Heart left ventricle (tissue), 16 donors: ENCODE measurements at regions of chr6 and their contacts with region 1.

Region 1: GRCh38 chr6:29759457-29759856 is 36.2 kb downstream of the HLA-F start:
- DNase-seq: no peak
- ATAC-seq: no peak
- H3K4me3 ChIP-seq: no peak overlapping the region
- H3K27ac ChIP-seq: no peak overlapping the region
- H3K4me1 ChIP-seq: peaks cover 0 to 16% (median 0%) of the 10 kb centered on the region in 12 donors
- H3K27me3 ChIP-seq: no peaks in the 10 kb centered on the region
- CTCF ChIP-seq: no peak
- POLR2A ChIP-seq: no peak

Region 2: DNA sequence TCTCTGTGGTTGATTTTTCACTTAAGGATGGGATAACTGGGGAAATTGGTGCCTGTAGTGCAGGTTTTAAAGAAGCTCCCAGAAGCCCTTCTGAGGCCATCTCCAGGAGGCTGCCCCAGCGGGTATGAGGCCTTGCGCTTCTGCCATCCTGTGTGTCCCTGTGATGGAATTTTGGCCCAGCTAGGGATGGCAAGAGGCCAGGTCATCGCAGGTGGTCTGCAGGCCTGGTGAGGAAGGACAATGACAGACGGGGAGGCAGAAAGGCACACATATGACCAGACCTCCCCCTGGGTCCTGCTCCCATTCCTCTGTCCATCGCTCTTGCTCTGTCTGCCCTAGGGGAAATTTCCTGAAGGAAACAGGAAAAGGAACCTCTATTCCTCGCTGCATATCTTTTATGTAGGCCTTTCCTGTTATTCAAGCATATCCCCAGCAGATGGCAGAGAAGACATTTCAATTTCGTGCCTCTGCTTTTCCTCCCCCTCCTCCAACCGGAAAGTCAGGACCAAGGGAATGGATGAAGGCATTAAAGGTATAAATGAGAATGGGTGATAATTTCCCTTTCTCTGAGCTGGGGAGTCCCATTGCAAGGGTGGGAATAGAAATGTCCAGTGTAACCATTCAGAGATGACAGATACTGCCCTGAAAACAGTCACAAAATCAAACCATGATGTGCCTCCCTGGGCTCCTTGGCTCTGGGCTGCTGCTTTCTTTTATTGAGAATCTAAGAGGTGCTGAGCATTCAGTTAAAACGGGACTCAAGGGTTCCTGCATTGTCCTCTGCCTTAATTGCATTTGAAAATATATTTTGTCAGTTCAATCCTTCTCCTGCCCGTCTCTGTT is 53.8 kb before region 1 on chr6:
- intact Hi-C with region 1: loop called in 4 of 10 experiments (anchors 5 to 10 kb)
- DNase-seq: peak in 1 of 5 donors; percentile 34
- ATAC-seq: peak in 3 of 4 donors; percentile 64 to 70 (median 67)
- H3K4me3 ChIP-seq: no peak overlapping the region
- H3K27ac ChIP-seq: no peak overlapping the region
- H3K4me1 ChIP-seq: peaks cover 0 to 20% (median 0%) of the 10 kb centered on the region in 12 donors
- H3K27me3 ChIP-seq: peaks cover 0 to 25% (median 2%) of the 10 kb centered on the region in 9 donors
- CTCF ChIP-seq: peak in 11 of 12 donors; percentile 38 to 74 (median 65)
- POLR2A ChIP-seq: no peak

Region 3: DNA sequence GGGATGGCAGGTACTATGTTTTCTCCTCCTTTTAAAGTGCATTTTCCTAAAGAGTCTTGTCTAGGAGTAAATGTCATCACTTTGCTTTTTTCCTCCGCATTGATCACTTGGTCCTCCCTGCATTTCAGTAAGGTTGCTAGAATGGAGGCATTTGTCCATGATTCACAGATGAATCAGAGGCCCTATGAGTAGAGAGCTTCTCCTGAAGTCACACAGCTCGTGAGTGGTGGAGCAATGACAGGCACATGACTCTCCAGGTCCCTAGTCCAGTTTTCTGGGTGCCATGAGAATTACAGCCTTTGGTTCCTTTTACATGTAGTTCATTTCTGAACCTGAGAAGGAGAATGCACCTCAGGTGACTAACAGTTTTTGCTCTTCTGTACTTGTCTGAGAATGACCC is 233.3 kb after region 1 on chr6:
- intact Hi-C with region 1: no loop called
- DNase-seq: no peak
- ATAC-seq: no peak
- H3K4me3 ChIP-seq: no peak overlapping the region
- H3K27ac ChIP-seq: no peak overlapping the region
- H3K4me1 ChIP-seq: no peaks in the 10 kb centered on the region
- H3K27me3 ChIP-seq: no peaks in the 10 kb centered on the region
- CTCF ChIP-seq: no peak
- POLR2A ChIP-seq: no peak